ENCODE measurements at regions of chr5 and their contacts with region 1.

Region 1: GRCh38 chr5:1568201-1568979 is 44.6 kb upstream of the LPCAT1 start:
- DNase-seq: no peak
- H3K4me3 ChIP-seq: no peak overlapping the region
- H3K4me1 ChIP-seq: no peaks in the 10 kb centered on the region
- H3K27me3 ChIP-seq: no peaks in the 10 kb centered on the region

Region 2: DNA sequence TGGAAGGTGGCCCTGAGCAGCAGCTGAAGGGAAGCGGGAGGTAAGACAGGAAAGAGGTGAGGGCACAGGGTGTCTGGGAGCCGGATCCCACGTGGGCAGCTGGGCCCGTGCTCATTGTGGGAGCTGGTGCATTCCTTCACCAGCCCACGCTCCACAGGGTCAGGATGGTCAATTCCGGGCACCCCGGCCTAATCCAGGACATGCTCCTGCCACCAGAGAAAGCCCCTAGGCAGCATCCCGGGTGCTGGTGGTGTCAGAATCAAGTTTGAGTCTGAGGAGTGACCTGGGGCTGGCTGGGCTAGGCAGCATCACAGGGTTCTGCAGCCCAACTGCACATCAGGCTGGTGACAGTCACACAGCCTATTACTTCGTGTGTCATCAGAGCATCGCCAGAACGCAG is 1304.0 kb before region 1 on chr5:
- in situ Hi-C with region 1: loop called (anchors 5 kb)
- DNase-seq: no peak
- H3K4me3 ChIP-seq: no peak overlapping the region
- H3K4me1 ChIP-seq: no peaks in the 10 kb centered on the region
- H3K27me3 ChIP-seq: no peaks in the 10 kb centered on the region

Region 3: DNA sequence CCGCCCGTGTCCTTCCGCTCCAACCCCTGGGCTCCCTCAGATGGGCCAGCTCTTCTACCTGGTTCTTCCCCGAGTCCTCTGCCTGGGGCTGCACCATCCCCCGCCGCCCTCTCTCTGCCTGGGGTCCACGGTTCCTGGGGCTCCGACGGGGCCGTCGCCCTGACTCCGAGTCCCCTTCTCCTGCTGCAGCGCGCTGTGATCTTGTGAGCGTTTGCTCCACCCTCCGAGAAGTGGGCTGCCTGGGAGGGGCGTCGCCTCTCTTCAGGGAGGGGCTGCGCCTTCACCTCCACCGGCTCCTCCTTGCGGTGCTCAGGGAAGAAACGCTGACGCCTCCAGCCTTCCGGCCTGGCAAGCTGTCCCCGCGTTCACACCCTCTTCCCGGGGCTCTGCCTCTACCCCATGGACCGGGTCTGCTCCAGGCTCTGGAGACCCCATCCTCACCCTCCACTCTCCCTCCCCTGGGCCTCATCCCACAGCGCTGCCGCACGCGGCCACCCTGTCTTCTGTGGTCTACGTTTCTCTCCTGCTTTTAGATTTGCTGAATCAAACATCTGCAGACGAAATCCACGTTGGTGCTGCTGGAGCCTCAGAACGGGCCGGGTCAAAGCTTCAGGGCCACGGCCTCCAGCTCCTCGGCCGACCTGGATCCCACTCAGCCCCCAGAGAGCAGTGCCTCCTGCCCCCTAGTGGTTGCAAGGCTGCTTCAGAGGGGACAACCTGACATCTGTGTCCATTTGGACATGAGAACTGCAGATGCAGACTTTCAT is 100.4 kb before region 1 on chr5:
- in situ Hi-C with region 1: no loop called
- DNase-seq: peak in 1 of 2 experiments; percentile 65
- H3K4me3 ChIP-seq: no peak overlapping the region
- H3K4me1 ChIP-seq: no peaks in the 10 kb centered on the region
- H3K27me3 ChIP-seq: no peaks in the 10 kb centered on the region